B cell (primary cell): ENCODE measurements at regions of chr4 and their contacts with region 1.

Region 1: DNA sequence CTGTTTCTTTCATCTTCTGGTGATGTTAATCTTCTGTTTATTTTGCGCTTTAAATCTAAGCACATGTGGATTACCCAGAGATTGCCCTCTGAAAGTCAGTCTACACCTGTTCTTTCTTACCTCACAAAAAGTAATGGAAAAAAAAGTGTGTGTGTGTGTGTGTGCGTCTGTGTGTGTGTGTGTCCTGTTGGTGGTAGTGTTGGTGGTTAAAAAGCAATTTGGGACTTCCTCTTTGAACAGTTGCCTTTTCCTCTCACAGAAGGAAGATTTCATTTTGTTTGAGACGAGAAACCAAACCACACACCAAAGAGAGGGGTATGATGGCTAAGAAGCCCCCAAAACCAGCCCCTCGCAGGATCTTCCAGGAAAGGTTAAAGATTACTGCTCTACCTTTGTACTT is at the start of gene STAP1:
- DNase-seq: peak; percentile 84
- ATAC-seq: peak; percentile 86
- H3K4me3 ChIP-seq: peak within 1 kb of the TSS; percentile 70 to 97 (median 83)
- H3K4me3 Mint-ChIP-seq: peak within 1 kb of the TSS; percentile 94
- H3K27ac ChIP-seq: peak within 1 kb of the TSS; percentile 63 to 82
- H3K27ac Mint-ChIP-seq: peak within 1 kb of the TSS; percentile 97
- H3K4me1 ChIP-seq: peaks cover 39 to 58% of the 10 kb centered on the region in 2 donors
- H3K4me1 Mint-ChIP-seq: peaks cover 68% of the 10 kb centered on the region
- H3K27me3 ChIP-seq: no peaks in the 10 kb centered on the region
- H3K27me3 Mint-ChIP-seq: no peaks in the 10 kb centered on the region
- CTCF ChIP-seq: no peak
- total RNA-seq, gene STAP1: 62.3 and 63.0 TPM in 2 replicates

Region 2: GRCh38 chr4:67568820-67569219 is 10.3 kb after region 1 on chr4:
- CTCF ChIA-PET with region 1: interaction called, 5 read pairs
- POLR2A ChIA-PET with region 1: interaction called, 7 read pairs
- intact Hi-C with region 1: loop called (anchors 1 kb)
- DNase-seq: no peak
- ATAC-seq: no peak
- H3K4me3 ChIP-seq: no peak overlapping the region
- H3K4me3 Mint-ChIP-seq: no peak overlapping the region
- H3K27ac ChIP-seq: peak overlapping the region in 1 of 2 donors; percentile 65
- H3K27ac Mint-ChIP-seq: peak overlapping the region; percentile 48
- H3K4me1 ChIP-seq: peaks cover 40 to 67% of the 10 kb centered on the region in 2 donors
- H3K4me1 Mint-ChIP-seq: peaks cover 72% of the 10 kb centered on the region
- H3K27me3 ChIP-seq: no peaks in the 10 kb centered on the region
- H3K27me3 Mint-ChIP-seq: no peaks in the 10 kb centered on the region
- CTCF ChIP-seq: no peak

Region 3: GRCh38 chr4:67575232-67575888 is 16.9 kb after region 1 on chr4:
- CTCF ChIA-PET with region 1: interaction called, 5 read pairs
- POLR2A ChIA-PET with region 1: interaction called, 7 read pairs
- intact Hi-C with region 1: loop called (anchors 1 kb)
- DNase-seq: peak; percentile 83
- ATAC-seq: peak; percentile 91
- H3K4me3 ChIP-seq: peak overlapping the region; percentile 21 to 56 (median 39)
- H3K4me3 Mint-ChIP-seq: peak overlapping the region; percentile 55
- H3K27ac ChIP-seq: peak overlapping the region; percentile 76 to 92
- H3K27ac Mint-ChIP-seq: peak overlapping the region; percentile 69
- H3K4me1 ChIP-seq: peaks cover 49 to 67% of the 10 kb centered on the region in 2 donors
- H3K4me1 Mint-ChIP-seq: peaks cover 70% of the 10 kb centered on the region
- H3K27me3 ChIP-seq: no peaks in the 10 kb centered on the region
- H3K27me3 Mint-ChIP-seq: no peaks in the 10 kb centered on the region
- CTCF ChIP-seq: no peak

Region 4: DNA sequence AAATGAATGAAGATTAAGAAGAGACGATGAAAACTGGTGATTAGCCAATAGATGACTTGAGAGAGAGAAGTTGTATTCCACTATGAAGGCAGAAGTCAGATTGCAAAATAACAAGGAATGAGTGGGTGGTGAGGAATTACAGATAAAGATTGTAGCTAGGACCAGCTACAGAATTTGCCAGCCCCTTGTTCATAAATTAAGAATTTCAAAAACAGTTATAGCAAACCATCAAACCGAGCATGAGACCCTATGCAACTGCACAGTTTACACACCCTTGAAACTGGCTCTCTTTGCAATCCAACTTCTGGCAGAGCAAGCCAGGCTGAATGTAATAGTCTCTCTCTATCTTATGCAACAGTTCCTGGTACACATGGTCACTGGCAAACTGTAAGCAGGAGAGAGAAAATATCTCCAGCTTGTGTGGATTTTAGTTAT is 35.3 kb after region 1 on chr4:
- CTCF ChIA-PET with region 1: no interaction called
- POLR2A ChIA-PET with region 1: no interaction called
- intact Hi-C with region 1: loop called (anchors 5 kb)
- DNase-seq: no peak
- ATAC-seq: no peak
- H3K4me3 ChIP-seq: no peak overlapping the region
- H3K4me3 Mint-ChIP-seq: no peak overlapping the region
- H3K27ac ChIP-seq: no peak overlapping the region
- H3K27ac Mint-ChIP-seq: peak overlapping the region; percentile 4
- H3K4me1 ChIP-seq: peaks cover 0 to 6% of the 10 kb centered on the region in 2 donors
- H3K4me1 Mint-ChIP-seq: peaks cover 26% of the 10 kb centered on the region
- H3K27me3 ChIP-seq: no peaks in the 10 kb centered on the region
- H3K27me3 Mint-ChIP-seq: no peaks in the 10 kb centered on the region
- CTCF ChIP-seq: no peak